ENCODE measurements at regions of chr20 and their contacts with region 1.

Region 1: DNA sequence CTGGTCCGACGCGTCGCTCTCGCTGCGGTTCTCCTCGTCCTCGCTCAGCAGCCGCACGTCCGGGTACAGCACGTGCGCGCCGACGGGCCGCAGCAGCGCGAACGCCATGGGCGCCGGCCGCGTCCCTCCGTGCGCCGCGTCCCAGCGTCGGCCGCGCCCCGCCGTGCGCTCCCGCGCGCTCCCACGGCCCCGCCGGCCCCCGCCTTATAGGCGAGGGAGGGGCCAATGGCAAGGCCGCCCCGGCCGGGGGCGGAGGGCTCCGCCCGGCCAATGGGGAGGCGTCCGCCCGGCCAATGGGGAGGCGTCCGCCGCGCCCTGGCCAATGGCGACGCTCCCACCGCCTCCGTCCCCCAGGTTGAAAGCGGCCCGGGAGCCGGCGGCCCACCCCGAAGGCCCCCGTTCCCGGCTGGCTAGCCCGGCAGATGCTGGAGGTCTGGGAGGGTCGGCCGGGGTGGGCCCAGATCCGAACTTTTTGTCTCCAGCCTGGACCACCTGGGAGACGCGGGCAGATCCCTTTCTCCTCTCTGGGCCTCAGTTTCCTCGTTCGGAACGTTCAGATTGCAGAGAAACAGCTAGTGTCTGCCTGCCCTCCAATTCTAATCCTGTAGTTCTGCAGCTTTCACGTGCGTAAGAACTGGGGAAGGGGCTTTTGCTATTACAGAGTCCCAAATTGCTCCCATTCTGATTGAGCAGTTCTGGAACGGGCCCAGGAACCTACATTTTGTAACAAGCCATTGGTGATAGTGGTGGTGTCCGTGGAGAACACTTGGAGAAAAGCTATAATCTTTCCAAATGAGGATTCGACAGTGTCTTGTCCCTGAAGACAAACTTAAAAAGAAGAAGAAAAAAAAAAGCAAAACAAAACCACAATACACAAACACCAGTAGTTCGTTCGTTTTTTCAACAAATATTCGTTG is at the start of gene TCF15:
- DNase-seq: peak in 1 of 2 donors; percentile 5
- H3K4me3 ChIP-seq: peak within 1 kb of the TSS; percentile 20 to 53 (median 21)
- H3K27ac ChIP-seq: no peak within 1 kb of the TSS
- H3K4me1 ChIP-seq: no peaks in the 10 kb centered on the region
- H3K27me3 ChIP-seq: peaks cover 0 to 61% of the 10 kb centered on the region in 2 donors
- CTCF ChIP-seq: no peak
- POLR2A ChIP-seq: no peak
- total RNA-seq, gene TCF15: 0.44 to 2.6 (median 1.1) TPM

Region 2: GRCh38 chr20:103456-103855 is 506.9 kb before region 1 on chr20:
- intact Hi-C with region 1: no loop called
- DNase-seq: no peak
- H3K4me3 ChIP-seq: no peak overlapping the region
- H3K27ac ChIP-seq: no peak overlapping the region
- H3K4me1 ChIP-seq: no peaks in the 10 kb centered on the region
- H3K27me3 ChIP-seq: peaks cover 0 to 21% of the 10 kb centered on the region in 2 donors
- CTCF ChIP-seq: no peak
- POLR2A ChIP-seq: no peak

Region 3: GRCh38 chr20:653110-653589 is 42.8 kb after region 1 on chr20 and contains the start of gene SRXN1:
- intact Hi-C with region 1: no loop called
- DNase-seq: peak; percentile 78 to 82
- H3K4me3 ChIP-seq: peak within 1 kb of the TSS; percentile 58 to 82 (median 72)
- H3K27ac ChIP-seq: peak within 1 kb of the TSS; percentile 83 to 89
- H3K4me1 ChIP-seq: no peaks in the 10 kb centered on the region
- H3K27me3 ChIP-seq: no peaks in the 10 kb centered on the region
- CTCF ChIP-seq: peak in 1 of 3 donors; percentile 56
- POLR2A ChIP-seq: no peak
- total RNA-seq, gene SRXN1: 16.2 to 30.2 (median 21.1) TPM

Region 4: GRCh38 chr20:675453-676314 is 65.3 kb after region 1 on chr20 and contains the start of gene SCRT2:
- intact Hi-C with region 1: no loop called
- DNase-seq: peak in 1 of 2 donors; percentile 79
- H3K4me3 ChIP-seq: peak within 1 kb of the TSS in 1 of 3 donors; percentile 36
- H3K27ac ChIP-seq: no peak within 1 kb of the TSS
- H3K4me1 ChIP-seq: peaks cover 3 to 4% of the 10 kb centered on the region in 2 donors
- H3K27me3 ChIP-seq: peaks cover 3 to 86% of the 10 kb centered on the region in 2 donors
- CTCF ChIP-seq: no peak
- POLR2A ChIP-seq: no peak
- total RNA-seq, gene SCRT2: not detected

Region 5: DNA sequence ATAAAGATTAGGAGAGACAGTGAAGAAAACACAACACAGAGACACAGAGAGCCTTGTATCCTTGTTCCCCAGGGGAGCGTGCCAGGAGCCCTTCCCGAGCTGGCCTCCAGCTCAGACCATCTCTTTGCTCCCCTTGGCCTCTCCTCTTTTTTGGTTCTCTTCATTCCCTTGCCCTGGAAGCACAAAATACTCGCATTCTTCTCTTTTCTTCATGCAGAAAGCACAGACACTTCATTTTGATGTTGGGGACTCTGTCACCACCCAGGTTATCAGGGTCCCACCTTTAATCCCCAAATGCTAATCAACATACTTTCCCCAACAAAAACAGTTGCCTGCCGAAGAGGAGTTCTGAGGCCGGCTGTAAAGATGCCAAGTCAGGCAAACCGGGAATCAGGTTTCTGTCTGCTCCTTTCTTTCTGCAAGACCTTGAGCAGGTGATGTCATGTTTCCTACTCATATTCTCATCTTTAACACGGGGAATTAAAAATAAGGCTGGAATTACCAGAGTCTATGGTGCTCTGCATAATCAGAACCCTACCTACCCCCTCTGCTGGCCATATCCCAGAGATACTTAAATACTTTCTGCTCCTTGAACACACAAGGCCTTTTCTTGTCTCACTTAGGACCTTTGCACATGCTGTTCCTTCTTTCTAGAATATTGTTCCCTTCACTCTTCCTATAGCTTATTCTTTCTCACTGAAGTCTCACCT is 1792.0 kb after region 1 on chr20:
- intact Hi-C with region 1: loop called (anchors 10 kb)
- DNase-seq: no peak
- H3K4me3 ChIP-seq: no peak overlapping the region
- H3K27ac ChIP-seq: no peak overlapping the region
- H3K4me1 ChIP-seq: no peaks in the 10 kb centered on the region
- H3K27me3 ChIP-seq: no peaks in the 10 kb centered on the region
- CTCF ChIP-seq: no peak
- POLR2A ChIP-seq: no peak

Measured in breast epithelium (tissue), 4 donors.